ENCODE measurements at regions of chr15 and their contacts with region 1.

Region 1: DNA sequence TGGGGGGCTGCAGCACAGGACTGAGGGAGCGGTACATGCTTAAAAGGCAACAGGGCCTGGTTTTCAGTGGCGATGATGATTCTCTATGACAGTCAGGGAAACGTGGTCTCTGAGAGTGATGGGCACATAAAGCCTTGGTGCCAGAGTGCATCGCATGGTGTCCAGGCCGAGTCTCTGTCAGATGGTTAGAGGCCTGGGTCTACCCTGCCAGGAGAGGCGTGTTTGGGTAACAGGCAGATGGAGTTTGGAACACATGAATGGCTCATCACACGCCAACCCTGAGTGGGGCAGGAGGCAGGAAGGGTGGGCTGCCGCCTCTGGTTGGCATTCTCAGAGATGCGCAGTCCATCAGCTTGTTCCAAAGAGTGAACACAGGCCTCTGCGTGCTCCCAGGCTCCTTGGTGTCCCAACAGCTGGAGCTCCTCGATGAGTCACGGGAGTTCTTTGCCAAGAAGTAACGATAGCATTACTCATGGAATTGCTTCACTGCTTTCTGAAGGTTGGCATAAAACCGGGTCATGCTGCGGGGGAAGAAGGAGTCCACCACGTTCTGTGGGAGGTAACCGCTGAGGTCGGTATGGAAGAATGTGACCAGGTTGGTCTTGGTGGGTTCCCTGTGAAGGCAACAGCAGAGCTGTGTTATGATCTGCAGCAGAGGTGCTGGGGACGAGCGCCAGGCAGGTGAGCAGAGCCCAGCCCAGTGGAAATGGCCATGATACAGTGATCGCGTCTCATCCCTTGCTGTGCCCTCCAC is 11.0 kb downstream of the STARD5 start:
- DNase-seq: peak; percentile 88 to 90
- ATAC-seq: peak; percentile 88
- H3K4me3 ChIP-seq: no peak overlapping the region
- H3K27ac ChIP-seq: peak overlapping the region in 1 of 2 donors; percentile 29
- H3K4me1 ChIP-seq: no peaks in the 10 kb centered on the region
- H3K27me3 ChIP-seq: no peaks in the 10 kb centered on the region

Region 2: DNA sequence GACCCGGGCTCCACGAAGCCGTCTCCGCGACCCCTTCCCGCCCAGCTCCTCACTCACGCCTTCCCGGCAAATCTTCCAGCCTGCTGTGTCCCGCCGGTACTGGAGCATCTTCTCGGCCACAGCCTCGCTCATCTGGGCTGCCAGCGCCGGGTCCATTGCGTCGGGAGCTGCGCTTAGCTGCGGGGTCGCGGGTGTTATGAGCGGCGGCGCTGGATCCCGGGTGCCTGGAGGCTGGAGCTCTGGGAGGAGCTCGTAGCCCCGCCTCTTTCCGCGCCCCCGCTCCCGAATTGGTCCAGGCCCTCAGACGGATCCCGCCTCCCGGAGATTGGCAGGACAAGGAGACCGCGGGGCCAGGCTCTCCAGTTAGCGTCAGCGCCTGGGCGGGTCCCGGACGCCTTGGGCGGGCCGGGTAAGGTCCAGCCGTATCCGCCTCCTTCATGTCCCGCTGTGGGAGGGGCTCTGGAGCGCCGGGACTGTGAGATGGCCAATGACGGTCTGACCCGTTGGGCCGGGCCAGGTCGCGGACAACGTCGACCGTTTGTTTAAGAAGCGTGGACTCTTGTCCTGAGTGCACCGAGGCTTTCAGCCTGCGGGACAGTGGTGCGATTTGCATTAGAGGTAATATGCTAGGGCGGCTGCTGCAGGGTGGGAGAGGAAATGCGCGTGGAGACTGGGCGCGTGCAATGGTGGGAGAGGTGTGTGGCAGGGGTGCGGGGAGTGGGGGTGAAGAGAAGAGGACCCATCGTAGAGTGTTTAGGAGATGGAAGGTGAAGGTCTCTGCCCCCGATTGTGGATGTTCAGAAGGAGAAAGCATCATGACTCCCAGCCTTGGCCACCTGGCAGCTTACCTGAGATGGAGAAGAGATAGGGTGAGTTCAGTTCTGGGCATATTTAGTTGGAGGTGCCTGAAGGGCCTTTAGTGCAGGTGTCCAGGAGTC is 11.2 kb after region 1 on chr15 and contains the start of gene STARD5:
- intact Hi-C with region 1: loop called in 1 of 2 experiments (anchors 1 kb)
- DNase-seq: peak; percentile 100
- ATAC-seq: peak; percentile 99
- H3K4me3 ChIP-seq: peak within 1 kb of the TSS; percentile 2 to 57
- H3K27ac ChIP-seq: peak within 1 kb of the TSS in 1 of 2 donors; percentile 22
- H3K4me1 ChIP-seq: no peaks in the 10 kb centered on the region
- H3K27me3 ChIP-seq: no peaks in the 10 kb centered on the region
- total RNA-seq, gene STARD5: 2.2 to 7.0 TPM

Region 3: DNA sequence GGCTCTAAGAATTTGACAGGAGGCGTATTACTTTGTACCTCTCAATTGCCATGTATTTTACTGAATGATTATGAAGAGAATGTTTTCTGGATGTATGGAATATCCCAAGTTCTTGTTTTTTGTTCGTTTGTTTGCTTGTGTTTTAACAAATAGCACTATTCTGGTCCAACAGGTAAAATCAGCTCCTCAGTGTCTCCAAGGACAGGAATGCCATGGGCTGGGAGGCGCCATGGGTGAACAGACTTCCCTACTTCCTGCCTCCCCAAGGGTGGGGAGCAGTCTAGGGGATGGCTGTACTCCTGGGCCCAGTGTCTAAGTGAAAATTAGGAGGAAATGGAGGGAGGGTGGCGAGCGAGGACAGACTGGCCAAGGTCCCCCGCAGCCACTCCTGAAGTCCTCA is 29.6 kb after region 1 on chr15:
- intact Hi-C with region 1: loop called in 1 of 2 experiments (anchors 5 kb)
- DNase-seq: no peak
- ATAC-seq: no peak
- H3K4me3 ChIP-seq: no peak overlapping the region
- H3K27ac ChIP-seq: no peak overlapping the region
- H3K4me1 ChIP-seq: peaks cover 0 to 4% of the 10 kb centered on the region in 2 donors
- H3K27me3 ChIP-seq: no peaks in the 10 kb centered on the region

Region 4: DNA sequence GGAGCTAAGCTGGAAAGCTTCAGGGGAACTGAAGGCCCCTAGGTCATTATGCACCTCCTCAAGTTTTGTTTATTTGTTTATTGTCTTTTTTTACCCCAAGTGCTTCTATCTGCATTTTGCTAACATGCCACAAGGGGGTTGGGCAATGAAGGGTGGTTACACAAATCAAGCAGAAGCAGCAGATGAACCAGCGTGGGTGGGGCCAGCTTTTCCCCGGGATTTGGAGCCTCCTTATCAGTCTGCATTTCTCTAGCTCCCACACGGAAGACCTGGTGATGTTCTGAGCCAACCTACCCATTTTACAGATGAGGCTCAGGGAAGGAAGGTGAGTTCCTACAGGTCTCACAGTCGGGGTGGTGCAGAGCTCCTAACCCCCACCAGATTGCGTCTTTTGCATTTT is 44.3 kb after region 1 on chr15:
- intact Hi-C with region 1: no loop called
- DNase-seq: no peak
- ATAC-seq: no peak
- H3K4me3 ChIP-seq: no peak overlapping the region
- H3K27ac ChIP-seq: no peak overlapping the region
- H3K4me1 ChIP-seq: no peaks in the 10 kb centered on the region
- H3K27me3 ChIP-seq: no peaks in the 10 kb centered on the region

Measured in aorta (tissue), 5 donors.